ENCODE measurements at regions of chr11 and their contacts with region 1.

Region 1: DNA sequence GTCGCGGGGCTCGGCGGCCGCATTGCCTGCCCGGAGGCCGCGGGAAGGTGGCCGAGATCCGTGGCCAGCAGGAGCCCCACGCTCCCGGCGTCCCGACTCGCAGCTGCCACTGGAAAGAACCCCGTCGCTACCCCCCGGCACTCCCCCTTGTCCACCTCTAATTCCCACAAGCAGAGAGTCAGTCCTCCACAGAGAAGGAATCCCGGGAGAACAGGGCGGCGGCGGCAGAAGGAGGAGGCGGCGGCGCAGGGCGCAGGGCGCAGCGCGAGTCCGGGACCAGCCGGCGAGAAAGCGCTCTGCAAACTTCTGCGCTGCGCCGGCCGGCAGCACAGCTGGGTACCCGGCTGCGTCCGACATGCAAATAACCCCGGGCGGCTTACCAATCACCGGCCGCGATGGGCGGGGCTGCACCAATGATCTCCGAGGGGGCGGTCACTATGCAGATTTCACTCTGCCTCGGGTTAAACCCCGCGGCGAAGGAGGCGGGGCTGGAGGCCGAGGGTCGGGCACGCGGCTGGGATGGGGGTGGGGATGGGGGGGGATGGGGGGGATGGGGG is at the start of gene ABTB2:
- DNase-seq: peak; percentile 95 to 97
- H3K4me3 ChIP-seq: peak within 1 kb of the TSS; percentile 59 to 71 (median 59)
- H3K27ac ChIP-seq: peak within 1 kb of the TSS; percentile 73 to 81
- H3K4me1 ChIP-seq: peaks cover 8% of the 10 kb centered on the region in 2 donors
- H3K27me3 ChIP-seq: peaks cover 0 to 7% of the 10 kb centered on the region in 2 donors
- CTCF ChIP-seq: no peak
- POLR2A ChIP-seq: peak; percentile 74
- total RNA-seq, gene ABTB2: 1.3 to 5.6 (median 1.9) TPM

Region 2: DNA sequence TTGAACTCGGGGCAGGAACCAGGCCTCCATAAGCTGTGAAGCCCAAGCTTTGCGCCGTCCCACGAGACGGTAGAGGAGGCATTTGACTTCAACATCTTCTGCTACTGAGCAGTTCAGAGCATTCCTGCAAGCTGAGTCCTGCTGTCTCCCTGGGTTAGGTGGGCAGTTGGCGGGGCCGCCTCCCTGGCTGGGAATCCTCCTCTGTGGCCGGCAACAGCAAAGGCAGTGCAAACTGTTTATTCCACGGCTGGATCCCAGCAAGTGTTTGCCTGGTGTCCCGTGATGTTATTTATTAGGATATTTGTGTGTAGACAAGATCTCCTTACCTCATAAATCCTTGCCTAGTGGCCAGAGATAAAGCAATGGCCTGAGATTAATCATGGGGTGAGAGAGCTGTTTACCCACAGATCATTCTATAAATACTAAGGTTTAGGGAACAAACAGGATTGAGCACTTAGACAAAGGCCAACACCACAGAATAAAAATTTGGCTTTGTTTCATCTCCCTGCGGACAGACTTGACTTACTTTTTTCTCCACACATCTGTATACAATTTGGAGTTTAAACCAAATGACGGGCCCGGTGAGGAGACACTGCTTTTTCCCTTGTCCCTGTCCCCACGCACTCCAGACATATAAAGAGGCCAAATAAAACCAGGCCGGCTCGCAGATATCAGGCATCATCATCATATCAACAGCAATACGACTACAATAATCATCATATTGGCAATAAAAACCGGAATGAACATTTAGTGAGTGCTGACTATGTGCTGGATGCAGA is 188.9 kb before region 1 on chr11:
- intact Hi-C with region 1: loop called (anchors 1 kb)
- DNase-seq: no peak
- H3K4me3 ChIP-seq: no peak overlapping the region
- H3K27ac ChIP-seq: peak overlapping the region in 1 of 2 donors; percentile 38
- H3K4me1 ChIP-seq: no peaks in the 10 kb centered on the region
- H3K27me3 ChIP-seq: no peaks in the 10 kb centered on the region
- CTCF ChIP-seq: no peak
- POLR2A ChIP-seq: no peak

Region 3: GRCh38 chr11:34174412-34175041 is 183.3 kb before region 1 on chr11:
- intact Hi-C with region 1: loop called (anchors 1 kb)
- DNase-seq: peak; percentile 71 to 81
- H3K4me3 ChIP-seq: peak overlapping the region; percentile 3 to 44 (median 34)
- H3K27ac ChIP-seq: peak overlapping the region; percentile 26 to 55
- H3K4me1 ChIP-seq: no peaks in the 10 kb centered on the region
- H3K27me3 ChIP-seq: no peaks in the 10 kb centered on the region
- CTCF ChIP-seq: peak; percentile 82 to 97 (median 96)
- POLR2A ChIP-seq: no peak